HAP-1 (cell line): ENCODE measurements at regions of chr20 and their contacts with region 1.

Region 1: GRCh38 chr20:39468703-39469102 is 506.6 kb downstream of the DHX35 start:
- DNase-seq: no peak
- H3K4me3 ChIP-seq: no peak overlapping the region
- H3K4me1 ChIP-seq: no peaks in the 10 kb centered on the region
- H3K27me3 ChIP-seq: no peaks in the 10 kb centered on the region

Region 2: DNA sequence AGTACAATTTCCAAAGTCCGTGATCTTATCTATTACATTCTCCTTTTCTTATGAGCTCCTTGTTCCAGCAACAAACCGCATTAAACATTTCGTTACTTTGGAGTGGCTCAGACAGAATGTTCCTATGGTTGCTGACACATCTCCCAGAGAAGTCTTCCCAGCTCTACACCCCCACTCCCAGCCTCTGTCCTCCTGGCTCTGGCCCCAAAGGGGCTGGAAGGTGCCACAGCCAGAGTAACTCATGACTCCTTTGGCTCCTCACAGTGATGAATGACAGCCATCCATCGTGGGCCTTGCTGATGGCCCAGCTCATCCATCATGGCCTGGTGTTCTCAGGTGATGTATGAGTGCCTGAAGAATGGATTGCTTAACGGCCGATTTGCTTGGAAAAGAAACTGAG is 303.6 kb before region 1 on chr20:
- in situ Hi-C with region 1: no loop called
- DNase-seq: no peak
- H3K4me3 ChIP-seq: no peak overlapping the region
- H3K4me1 ChIP-seq: no peaks in the 10 kb centered on the region
- H3K27me3 ChIP-seq: no peaks in the 10 kb centered on the region

Region 3: GRCh38 chr20:39358052-39358451 is 110.7 kb before region 1 on chr20:
- in situ Hi-C with region 1: loop called (anchors 25 kb)
- DNase-seq: no peak
- H3K4me3 ChIP-seq: no peak overlapping the region
- H3K4me1 ChIP-seq: no peaks in the 10 kb centered on the region
- H3K27me3 ChIP-seq: no peaks in the 10 kb centered on the region